ENCODE measurements at regions of chr17 and their contacts with region 1.

Region 1: GRCh38 chr17:39636927-39637736 is at the start of gene STARD3:
- DNase-seq: peak; percentile 95
- ATAC-seq: peak; percentile 93
- H3K4me3 Mint-ChIP-seq: peak within 1 kb of the TSS; percentile 90
- H3K27ac Mint-ChIP-seq: peak within 1 kb of the TSS; percentile 87
- H3K4me1 Mint-ChIP-seq: peaks cover 46% of the 10 kb centered on the region
- H3K27me3 Mint-ChIP-seq: no peaks in the 10 kb centered on the region
- CTCF ChIP-seq: no peak
- total RNA-seq, gene STARD3: 48.7 to 50.3 TPM

Region 2: GRCh38 chr17:39513309-39513708 is 123.8 kb before region 1 on chr17:
- CTCF ChIA-PET with region 1: no interaction called
- POLR2A ChIA-PET with region 1: no interaction called
- intact Hi-C with region 1: no loop called
- DNase-seq: no peak
- ATAC-seq: no peak
- H3K4me3 Mint-ChIP-seq: no peak overlapping the region
- H3K27ac Mint-ChIP-seq: peak overlapping the region; percentile 31
- H3K4me1 Mint-ChIP-seq: peaks cover 7% of the 10 kb centered on the region
- H3K27me3 Mint-ChIP-seq: no peaks in the 10 kb centered on the region
- CTCF ChIP-seq: no peak

Region 3: GRCh38 chr17:39563476-39563875 is 73.7 kb before region 1 on chr17:
- CTCF ChIA-PET with region 1: no interaction called
- POLR2A ChIA-PET with region 1: no interaction called
- intact Hi-C with region 1: no loop called
- DNase-seq: no peak
- ATAC-seq: no peak
- H3K4me3 Mint-ChIP-seq: no peak overlapping the region
- H3K27ac Mint-ChIP-seq: no peak overlapping the region
- H3K4me1 Mint-ChIP-seq: no peaks in the 10 kb centered on the region
- H3K27me3 Mint-ChIP-seq: no peaks in the 10 kb centered on the region
- CTCF ChIP-seq: no peak

Region 4: GRCh38 chr17:39668199-39668966 is 31.3 kb after region 1 on chr17 and contains the start of gene PNMT:
- CTCF ChIA-PET with region 1: interaction called, 11 read pairs
- POLR2A ChIA-PET with region 1: no interaction called
- intact Hi-C with region 1: no loop called
- DNase-seq: peak; percentile 82
- ATAC-seq: peak; percentile 83
- H3K4me3 Mint-ChIP-seq: peak within 1 kb of the TSS; percentile 60
- H3K27ac Mint-ChIP-seq: no peak within 1 kb of the TSS
- H3K4me1 Mint-ChIP-seq: peaks cover 10% of the 10 kb centered on the region
- H3K27me3 Mint-ChIP-seq: peaks cover 15% of the 10 kb centered on the region
- CTCF ChIP-seq: peak; percentile 76
- total RNA-seq, gene PNMT: 0.40 TPM in 1 of 2 experiments, not detected in the other

Region 5: GRCh38 chr17:39852239-39852638 is 215.1 kb after region 1 on chr17:
- CTCF ChIA-PET with region 1: no interaction called
- POLR2A ChIA-PET with region 1: no interaction called
- intact Hi-C with region 1: no loop called
- DNase-seq: no peak
- ATAC-seq: peak; percentile 66
- H3K4me3 Mint-ChIP-seq: peak overlapping the region; percentile 41
- H3K27ac Mint-ChIP-seq: peak overlapping the region; percentile 83
- H3K4me1 Mint-ChIP-seq: peaks cover 56% of the 10 kb centered on the region
- H3K27me3 Mint-ChIP-seq: no peaks in the 10 kb centered on the region
- CTCF ChIP-seq: no peak

Measured in activated CD8-positive, alpha-beta T cell treated with anti-CD3 and anti-CD28 coated beads for 36 hours (primary cell).